SK-N-SH (cell line): ENCODE measurements at regions of chr1 and their contacts with region 1.

Region 1: DNA sequence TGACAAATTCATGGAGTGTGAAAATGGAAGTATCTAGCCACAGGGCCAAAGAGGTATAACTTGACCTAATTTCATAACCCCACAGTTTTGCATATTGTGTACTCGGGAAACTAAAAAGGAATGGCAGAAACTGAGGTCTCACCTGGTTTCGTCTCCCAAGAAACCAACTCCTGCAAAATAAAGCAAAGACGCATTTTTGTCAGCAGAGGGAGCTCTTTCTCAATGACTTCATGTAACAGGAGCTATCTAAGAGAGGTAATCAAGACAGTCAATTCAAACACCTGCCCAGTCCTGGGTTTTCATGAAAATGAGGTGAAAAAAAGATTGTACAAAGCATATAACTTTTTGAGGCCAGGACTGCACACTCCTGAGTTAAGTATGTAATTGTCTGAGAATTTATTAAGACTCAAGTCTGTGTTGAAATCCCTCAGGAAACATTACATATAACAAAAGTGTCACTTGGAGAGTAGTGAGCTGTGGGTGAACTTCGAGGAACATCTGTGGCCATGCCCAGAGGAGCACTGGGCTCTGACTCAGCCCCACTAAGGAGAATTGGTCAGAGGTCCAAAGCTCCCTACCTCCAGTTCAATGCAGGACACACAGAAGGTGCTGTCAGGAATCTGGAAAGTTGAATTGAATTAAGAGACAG is 17.6 kb downstream of the FCRL4 start:
- DNase-seq: peak; percentile 21
- H3K4me3 ChIP-seq: peak overlapping the region in 1 of 2 experiments; percentile 26; a peak in 1 of 4 replicates
- H3K27ac ChIP-seq: no peak overlapping the region
- H3K4me1 ChIP-seq: no peaks in the 10 kb centered on the region
- H3K27me3 ChIP-seq: peaks cover 7% of the 10 kb centered on the region; the same call in 1 of the 2 replicates
- CTCF ChIP-seq: peak; percentile 81
- EP300 ChIP-seq: no peak
- RAD21 ChIP-seq: peak; percentile 52

Region 2: GRCh38 chr1:157487096-157487495 is 93.2 kb before region 1 on chr1:
- CTCF ChIA-PET with region 1: no interaction called
- POLR2A ChIA-PET with region 1: no interaction called
- DNase-seq: no peak
- H3K4me3 ChIP-seq: no peak overlapping the region
- H3K27ac ChIP-seq: no peak overlapping the region
- H3K4me1 ChIP-seq: no peaks in the 10 kb centered on the region
- H3K27me3 ChIP-seq: peaks cover 14% of the 10 kb centered on the region
- CTCF ChIP-seq: no peak
- EP300 ChIP-seq: no peak
- RAD21 ChIP-seq: no peak

Region 3: DNA sequence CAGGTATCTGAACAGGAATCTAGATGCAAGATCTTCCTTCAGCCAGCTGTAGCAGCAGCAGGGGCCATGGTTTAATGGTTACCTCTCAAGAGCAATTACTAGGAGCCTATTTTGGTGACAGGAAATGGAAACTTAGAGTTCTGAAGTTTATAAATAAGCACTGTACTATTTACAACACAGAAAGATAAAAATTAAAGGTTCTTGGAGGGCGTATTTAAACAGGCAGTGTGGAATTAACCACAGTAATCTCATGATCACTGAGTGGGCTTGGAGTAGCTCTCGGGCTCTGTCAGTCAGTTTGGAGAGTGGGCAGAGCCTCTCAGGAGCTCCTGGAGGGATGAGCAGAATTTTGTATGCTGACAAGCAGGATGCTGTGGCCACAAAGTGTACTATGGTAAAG is 17.8 kb before region 1 on chr1:
- CTCF ChIA-PET with region 1: interaction called, 19 read pairs
- POLR2A ChIA-PET with region 1: no interaction called
- DNase-seq: no peak
- H3K4me3 ChIP-seq: no peak overlapping the region
- H3K27ac ChIP-seq: no peak overlapping the region
- H3K4me1 ChIP-seq: no peaks in the 10 kb centered on the region
- H3K27me3 ChIP-seq: peaks cover 9% of the 10 kb centered on the region; the same call in 1 of the 2 replicates
- CTCF ChIP-seq: no peak
- EP300 ChIP-seq: no peak
- RAD21 ChIP-seq: no peak

Region 4: DNA sequence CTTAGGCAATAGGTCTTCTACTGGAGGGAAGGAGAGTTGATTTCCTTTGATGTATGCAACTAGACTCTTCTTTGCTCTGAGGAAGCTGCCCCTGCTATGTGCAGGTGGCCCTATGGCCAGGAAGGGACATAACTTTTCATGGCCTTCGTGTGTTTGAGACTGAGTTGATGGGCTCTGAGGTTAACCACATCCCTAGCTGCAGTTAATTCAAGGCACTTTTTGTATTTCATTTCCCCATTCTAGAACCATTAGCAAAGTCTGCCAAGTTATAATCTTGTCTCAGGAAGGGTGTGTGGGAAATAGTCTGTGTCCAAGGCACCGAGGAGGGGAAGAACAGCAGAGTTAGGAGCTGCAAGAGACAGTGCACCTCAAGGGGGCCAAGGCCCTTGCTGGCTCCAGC is 15.1 kb after region 1 on chr1:
- CTCF ChIA-PET with region 1: interaction called, 14 read pairs
- POLR2A ChIA-PET with region 1: no interaction called
- DNase-seq: no peak
- H3K4me3 ChIP-seq: no peak overlapping the region
- H3K27ac ChIP-seq: no peak overlapping the region
- H3K4me1 ChIP-seq: no peaks in the 10 kb centered on the region
- H3K27me3 ChIP-seq: no peaks in the 10 kb centered on the region
- CTCF ChIP-seq: no peak
- EP300 ChIP-seq: no peak
- RAD21 ChIP-seq: no peak

Region 5: DNA sequence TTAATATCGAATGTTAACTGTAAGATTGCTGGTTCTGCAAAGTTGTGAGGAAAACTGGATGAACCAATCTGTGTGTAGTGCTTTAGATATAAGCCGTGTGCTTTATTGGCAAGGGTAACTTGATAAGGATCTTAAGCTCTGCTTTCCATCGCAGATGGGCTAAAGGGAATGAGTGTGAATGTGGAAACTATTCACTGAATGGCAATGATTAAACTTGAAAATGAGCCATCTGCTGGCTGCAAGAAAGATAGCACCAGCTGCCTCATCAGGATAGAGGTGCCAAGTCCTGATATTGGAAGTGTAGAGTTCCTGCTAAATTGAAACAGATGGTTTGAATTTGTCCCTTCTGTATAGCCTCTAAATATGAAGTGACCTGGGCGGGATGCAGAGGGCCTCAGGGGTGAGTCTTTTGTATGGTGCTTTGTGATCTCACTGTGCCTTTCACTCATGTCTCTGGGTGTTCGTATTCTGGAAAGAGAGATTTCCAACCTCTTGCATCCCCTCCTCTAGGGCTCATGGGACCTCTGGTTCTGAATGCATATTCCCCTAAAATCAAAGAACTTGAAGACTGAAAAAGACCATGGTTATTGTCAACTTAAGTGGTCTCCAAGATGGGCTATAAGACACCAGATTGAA is 111.1 kb after region 1 on chr1:
- CTCF ChIA-PET with region 1: interaction called, 30 read pairs
- POLR2A ChIA-PET with region 1: no interaction called
- DNase-seq: peak; percentile 42
- H3K4me3 ChIP-seq: no peak overlapping the region
- H3K27ac ChIP-seq: no peak overlapping the region
- H3K4me1 ChIP-seq: no peaks in the 10 kb centered on the region; a peak in 1 of 4 replicates
- H3K27me3 ChIP-seq: peaks cover 5% of the 10 kb centered on the region
- CTCF ChIP-seq: peak; percentile 59
- EP300 ChIP-seq: no peak
- RAD21 ChIP-seq: peak; percentile 37